Prostate gland (tissue), 2 donors: ENCODE measurements at regions of chr7 and their contacts with region 1.

Region 1: GRCh38 chr7:52179934-52180333 is 855.5 kb upstream of the POM121L12 start:
- DNase-seq: no peak
- H3K4me3 ChIP-seq: no peak overlapping the region
- H3K27ac ChIP-seq: no peak overlapping the region
- H3K4me1 ChIP-seq: no peaks in the 10 kb centered on the region
- H3K27me3 ChIP-seq: no peaks in the 10 kb centered on the region
- CTCF ChIP-seq: no peak
- POLR2A ChIP-seq: no peak

Region 2: DNA sequence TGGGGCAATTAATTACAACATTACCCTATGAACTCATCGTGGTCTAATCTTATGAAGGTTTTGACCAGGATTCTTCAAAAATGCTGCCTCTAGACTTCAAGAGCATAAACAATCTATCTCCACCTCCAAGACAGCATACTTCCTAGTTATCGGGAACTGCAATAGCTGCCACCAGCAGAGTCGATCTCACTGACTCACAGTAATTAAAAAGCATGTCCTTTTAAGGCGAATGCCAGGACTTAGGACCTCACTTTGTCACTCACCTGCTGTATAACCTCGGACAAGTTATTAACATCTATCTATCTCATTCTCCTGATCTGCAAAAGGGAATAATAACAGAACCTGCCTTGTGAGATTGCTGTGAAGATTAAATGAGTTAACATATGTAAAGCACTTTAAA is 197.3 kb before region 1 on chr7:
- intact Hi-C with region 1: no loop called
- DNase-seq: no peak
- H3K4me3 ChIP-seq: no peak overlapping the region
- H3K27ac ChIP-seq: no peak overlapping the region
- H3K4me1 ChIP-seq: no peaks in the 10 kb centered on the region
- H3K27me3 ChIP-seq: no peaks in the 10 kb centered on the region
- CTCF ChIP-seq: no peak
- POLR2A ChIP-seq: no peak

Region 3: DNA sequence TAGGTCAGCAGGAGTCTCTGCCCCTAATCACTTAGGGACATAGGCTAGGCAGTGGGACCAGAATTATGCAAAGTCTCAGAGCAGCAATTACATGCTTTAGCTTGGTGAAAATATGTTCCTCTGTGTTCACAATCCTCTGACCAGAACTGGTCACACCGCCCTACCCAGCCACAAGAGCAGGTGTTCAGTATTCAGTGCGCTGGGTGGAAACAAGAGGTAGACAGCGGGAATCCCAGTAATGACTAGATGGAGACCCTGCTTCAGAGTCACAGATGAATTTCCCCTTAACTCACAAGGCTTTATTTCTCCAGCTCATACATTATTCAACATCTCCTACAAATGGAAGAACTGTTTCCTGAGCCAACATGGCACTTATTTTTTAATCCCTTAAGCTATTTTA is 91.8 kb after region 1 on chr7:
- intact Hi-C with region 1: no loop called
- DNase-seq: no peak
- H3K4me3 ChIP-seq: no peak overlapping the region
- H3K27ac ChIP-seq: no peak overlapping the region
- H3K4me1 ChIP-seq: no peaks in the 10 kb centered on the region
- H3K27me3 ChIP-seq: no peaks in the 10 kb centered on the region
- CTCF ChIP-seq: no peak
- POLR2A ChIP-seq: no peak

Region 4: DNA sequence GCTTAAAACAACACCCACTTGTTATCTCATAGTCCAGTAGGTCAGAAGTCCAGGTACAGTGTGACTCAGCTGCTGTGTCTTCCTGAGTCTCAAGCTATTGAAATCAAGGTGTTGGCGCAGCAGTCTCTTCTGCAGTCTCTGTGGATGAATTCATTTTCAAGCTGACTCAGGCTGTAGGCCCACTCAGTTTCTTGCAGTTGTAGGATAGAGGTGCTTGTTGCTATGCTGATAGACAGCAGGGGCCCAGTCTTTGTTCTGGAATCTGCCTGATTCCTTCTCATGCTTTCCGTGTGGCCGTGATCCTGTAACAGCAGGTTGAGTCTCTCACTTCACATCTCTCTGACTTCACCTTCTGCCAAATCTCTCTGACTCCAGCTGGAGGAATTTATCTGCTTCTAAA is 455.1 kb after region 1 on chr7:
- intact Hi-C with region 1: no loop called
- DNase-seq: no peak
- H3K4me3 ChIP-seq: no peak overlapping the region
- H3K27ac ChIP-seq: no peak overlapping the region
- H3K4me1 ChIP-seq: no peaks in the 10 kb centered on the region
- H3K27me3 ChIP-seq: no peaks in the 10 kb centered on the region
- CTCF ChIP-seq: no peak
- POLR2A ChIP-seq: no peak

Region 5: DNA sequence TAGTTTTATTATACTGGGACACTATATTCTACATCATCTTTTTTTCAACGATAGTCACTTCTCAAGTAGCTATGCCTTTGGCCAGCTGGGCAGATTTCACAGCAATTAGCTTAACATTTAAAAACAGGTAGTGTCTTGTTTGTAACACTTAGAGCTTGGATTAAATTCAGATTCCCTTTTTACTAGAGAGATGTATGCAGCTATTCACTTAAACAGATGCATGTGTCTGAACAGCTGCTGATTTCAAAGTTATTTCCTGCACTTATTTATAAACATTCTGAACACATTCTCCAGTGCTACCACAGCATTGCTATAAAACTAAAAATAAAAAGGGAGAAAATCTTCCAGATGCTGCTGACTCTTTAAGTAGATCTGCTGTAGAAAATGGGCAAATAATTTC is 1492.7 kb after region 1 on chr7:
- intact Hi-C with region 1: loop called (anchors 10 kb)
- DNase-seq: no peak
- H3K4me3 ChIP-seq: no peak overlapping the region
- H3K27ac ChIP-seq: no peak overlapping the region
- H3K4me1 ChIP-seq: no peaks in the 10 kb centered on the region
- H3K27me3 ChIP-seq: no peaks in the 10 kb centered on the region
- CTCF ChIP-seq: no peak
- POLR2A ChIP-seq: no peak